Activated CD8-positive, alpha-beta T cell treated with anti-CD3 and anti-CD28 coated beads, Interleukin-2, amount 10 ng/mL, durations not matched to agents 7 days and 5 days (primary cell): ENCODE measurements at regions of chr5 and their contacts with region 1.

Region 1: GRCh38 chr5:95631991-95632675 is 12.2 kb downstream of the GPR150 start:
- DNase-seq: peak; percentile 85
- ATAC-seq: peak; percentile 100
- H3K4me3 Mint-ChIP-seq: no peak overlapping the region
- H3K27ac Mint-ChIP-seq: peak overlapping the region; percentile 91
- H3K4me1 Mint-ChIP-seq: peaks cover 16% of the 10 kb centered on the region
- H3K27me3 Mint-ChIP-seq: peaks cover 12% of the 10 kb centered on the region

Region 2: GRCh38 chr5:95620030-95620869 is 11.9 kb before region 1 on chr5 and contains the start of gene GPR150:
- CTCF ChIA-PET with region 1: interaction called, 20 read pairs
- POLR2A ChIA-PET with region 1: interaction called, 17 read pairs
- DNase-seq: peak; percentile 76
- ATAC-seq: peak; percentile 74
- H3K4me3 Mint-ChIP-seq: peak within 1 kb of the TSS; percentile 85
- H3K27ac Mint-ChIP-seq: peak within 1 kb of the TSS; percentile 74
- H3K4me1 Mint-ChIP-seq: peaks cover 47% of the 10 kb centered on the region
- H3K27me3 Mint-ChIP-seq: no peaks in the 10 kb centered on the region
- total RNA-seq, gene GPR150: 0.74 to 0.83 TPM

Region 3: GRCh38 chr5:95646554-95647431 is 14.7 kb after region 1 on chr5 and contains the start of gene RFESD:
- CTCF ChIA-PET with region 1: interaction called, 22 read pairs
- POLR2A ChIA-PET with region 1: interaction called, 4 read pairs
- DNase-seq: peak; percentile 97
- ATAC-seq: peak; percentile 97
- H3K4me3 Mint-ChIP-seq: peak within 1 kb of the TSS; percentile 78
- H3K27ac Mint-ChIP-seq: peak within 1 kb of the TSS; percentile 88
- H3K4me1 Mint-ChIP-seq: peaks cover 36% of the 10 kb centered on the region
- H3K27me3 Mint-ChIP-seq: no peaks in the 10 kb centered on the region
- total RNA-seq, gene RFESD: 4.9 to 5.1 TPM